ENCODE measurements at regions of chr6 and their contacts with region 1.

Region 1: DNA sequence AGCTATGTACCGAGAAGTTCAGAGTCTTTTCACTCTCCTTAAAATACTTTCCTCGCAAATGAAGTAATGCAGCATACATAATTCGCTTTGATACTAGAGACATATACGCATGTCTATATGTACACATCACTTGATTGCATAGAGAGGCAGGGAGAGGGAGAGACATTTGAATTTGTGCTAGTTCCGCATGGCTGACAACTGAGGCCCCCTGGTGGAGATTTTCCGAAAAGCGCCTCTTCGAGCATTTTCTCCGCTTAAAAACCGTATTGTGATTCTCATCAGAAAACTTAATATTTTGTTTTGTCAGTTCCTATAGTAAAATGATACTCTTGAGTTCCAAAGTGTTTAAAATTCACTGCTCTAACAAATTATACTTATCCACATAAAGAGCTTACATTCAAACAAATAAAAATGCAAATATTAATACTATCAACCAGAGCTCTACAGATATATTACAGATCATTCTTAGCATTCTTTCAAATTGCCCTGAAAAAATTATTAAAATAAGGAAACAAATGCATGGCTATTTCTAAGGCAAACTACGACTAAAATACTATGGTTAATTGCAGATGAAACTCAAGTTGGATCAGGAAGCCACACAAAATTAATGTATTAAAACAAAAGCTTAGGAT is 637 bp downstream of the MYLK4 start:
- DNase-seq: peak in 1 of 2 experiments; percentile 81
- H3K4me3 ChIP-seq: no peak overlapping the region
- H3K27ac ChIP-seq: no peak overlapping the region
- H3K4me1 ChIP-seq: peaks cover 0 to 5% (median 2%) of the 10 kb centered on the region in 4 experiments; a peak in 4 of 7 replicates
- H3K27me3 ChIP-seq: no peaks in the 10 kb centered on the region
- CTCF ChIP-seq: peak; percentile 52 to 76 (median 73)
- EP300 ChIP-seq: no peak
- POLR2A ChIP-seq: no peak
- RAD21 ChIP-seq: peak; percentile 56 to 65

Region 2: DNA sequence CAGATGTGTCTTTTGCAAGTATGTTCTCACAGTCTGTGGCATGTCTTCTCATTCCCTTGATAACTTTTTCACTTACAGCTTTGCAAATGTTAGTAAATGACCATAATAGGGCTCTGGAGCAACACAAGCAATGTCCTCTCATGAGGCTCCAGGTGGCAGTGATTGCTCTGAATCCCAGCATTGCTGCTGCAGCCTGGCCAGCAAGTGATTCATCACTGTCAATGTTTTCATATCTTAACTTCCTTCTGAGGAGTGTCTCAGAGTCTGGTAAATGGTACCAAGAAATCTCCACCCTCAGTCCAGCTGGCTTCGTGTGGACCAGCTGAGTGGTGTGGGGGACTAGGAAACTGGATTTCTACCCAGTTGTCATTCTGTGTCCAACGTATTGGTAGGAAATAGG is 139.0 kb before region 1 on chr6:
- CTCF ChIA-PET with region 1: no interaction called
- POLR2A ChIA-PET with region 1: no interaction called
- DNase-seq: no peak
- H3K4me3 ChIP-seq: no peak overlapping the region
- H3K27ac ChIP-seq: no peak overlapping the region
- H3K4me1 ChIP-seq: no peaks in the 10 kb centered on the region
- H3K27me3 ChIP-seq: no peaks in the 10 kb centered on the region
- CTCF ChIP-seq: no peak
- EP300 ChIP-seq: no peak
- POLR2A ChIP-seq: no peak
- RAD21 ChIP-seq: no peak

Region 3: DNA sequence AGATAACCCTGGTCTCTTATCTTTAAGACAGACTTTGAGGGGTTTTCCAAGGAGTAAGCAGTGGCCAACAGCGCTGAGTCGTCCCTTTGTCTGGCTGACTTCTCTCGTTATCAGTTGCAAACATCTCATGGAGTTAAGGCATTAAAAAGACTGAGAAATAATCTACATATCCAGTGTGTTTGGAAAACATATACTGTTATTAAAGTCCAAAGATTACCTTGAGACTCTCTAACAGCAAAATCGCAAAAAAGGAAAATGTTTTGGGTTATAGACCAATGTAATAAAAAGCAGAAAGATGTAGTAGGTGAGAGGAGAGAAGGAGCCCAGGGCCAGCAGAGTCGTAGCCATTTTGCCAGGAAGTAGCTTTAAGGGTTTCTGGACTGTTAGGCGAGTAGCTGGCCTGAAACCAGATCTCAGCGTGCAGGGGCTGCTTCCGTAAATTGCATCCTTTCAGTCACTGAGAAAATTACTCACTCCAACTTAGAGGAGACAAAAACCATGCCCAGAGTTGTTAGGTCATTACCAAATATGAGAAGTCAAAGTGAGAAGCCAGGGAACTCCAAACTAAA is 24.0 kb before region 1 on chr6:
- CTCF ChIA-PET with region 1: interaction called, 13 read pairs
- POLR2A ChIA-PET with region 1: no interaction called
- DNase-seq: no peak
- H3K4me3 ChIP-seq: no peak overlapping the region
- H3K27ac ChIP-seq: no peak overlapping the region
- H3K4me1 ChIP-seq: no peaks in the 10 kb centered on the region; a peak in 2 of 7 replicates
- H3K27me3 ChIP-seq: no peaks in the 10 kb centered on the region; a peak in 1 of 7 replicates
- CTCF ChIP-seq: no peak
- EP300 ChIP-seq: no peak
- POLR2A ChIP-seq: no peak
- RAD21 ChIP-seq: no peak

Region 4: DNA sequence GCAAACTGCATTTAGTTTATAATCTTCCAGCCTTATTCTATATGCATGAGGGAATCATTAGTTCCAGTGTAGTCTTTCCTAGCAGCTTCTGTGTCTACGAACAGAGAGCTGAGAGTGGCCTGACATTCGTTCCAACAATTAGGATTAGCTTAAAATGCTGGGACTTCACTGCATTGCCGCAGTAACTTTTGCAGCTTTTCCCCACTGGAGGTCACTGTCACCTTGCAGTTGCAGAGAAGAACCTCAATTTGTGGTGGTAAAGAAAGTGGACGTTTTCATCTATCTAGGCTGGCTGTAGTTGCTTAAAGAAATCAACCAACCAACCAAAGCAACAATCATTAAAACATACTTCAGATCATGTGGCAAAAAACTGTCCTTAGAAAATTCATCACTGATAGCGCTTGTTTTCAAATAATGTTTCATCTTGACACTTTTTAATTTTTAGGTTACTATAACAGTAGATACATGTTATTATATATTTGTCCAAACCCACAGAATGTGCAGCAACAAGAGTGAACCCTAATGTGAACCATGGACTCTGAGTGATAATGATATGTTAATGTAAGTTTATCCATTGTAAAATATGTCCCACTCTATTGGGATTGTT is 11.6 kb before region 1 on chr6:
- CTCF ChIA-PET with region 1: interaction called, 160 read pairs
- POLR2A ChIA-PET with region 1: no interaction called
- DNase-seq: peak in 1 of 2 experiments; percentile 64
- H3K4me3 ChIP-seq: no peak overlapping the region
- H3K27ac ChIP-seq: no peak overlapping the region
- H3K4me1 ChIP-seq: peaks cover 3 to 20% (median 6%) of the 10 kb centered on the region in 4 experiments
- H3K27me3 ChIP-seq: no peaks in the 10 kb centered on the region
- CTCF ChIP-seq: peak; percentile 61 to 93 (median 89)
- EP300 ChIP-seq: no peak
- POLR2A ChIP-seq: no peak
- RAD21 ChIP-seq: peak; percentile 93 to 96

Region 5: GRCh38 chr6:2765166-2765895 is 15.2 kb after region 1 on chr6 and contains the start of gene WRNIP1:
- CTCF ChIA-PET with region 1: interaction called, 163 read pairs
- POLR2A ChIA-PET with region 1: interaction called, 4 read pairs
- DNase-seq: peak; percentile 92 to 95
- H3K4me3 ChIP-seq: peak within 1 kb of the TSS; percentile 81 to 94 (median 84)
- H3K27ac ChIP-seq: peak within 1 kb of the TSS; percentile 40
- H3K4me1 ChIP-seq: peaks cover 0 to 11% (median 8%) of the 10 kb centered on the region in 4 experiments; a peak in 4 of 7 replicates
- H3K27me3 ChIP-seq: no peaks in the 10 kb centered on the region
- CTCF ChIP-seq: peak; percentile 65 to 70 (median 66)
- EP300 ChIP-seq: peak in 1 of 2 experiments; percentile 58; a peak in 1 of 3 replicates
- POLR2A ChIP-seq: no peak
- RAD21 ChIP-seq: peak; percentile 9 to 23; a peak in 1 of 4 replicates
- total RNA-seq, gene WRNIP1: 39.2 TPM in 2 replicates

Region 6: DNA sequence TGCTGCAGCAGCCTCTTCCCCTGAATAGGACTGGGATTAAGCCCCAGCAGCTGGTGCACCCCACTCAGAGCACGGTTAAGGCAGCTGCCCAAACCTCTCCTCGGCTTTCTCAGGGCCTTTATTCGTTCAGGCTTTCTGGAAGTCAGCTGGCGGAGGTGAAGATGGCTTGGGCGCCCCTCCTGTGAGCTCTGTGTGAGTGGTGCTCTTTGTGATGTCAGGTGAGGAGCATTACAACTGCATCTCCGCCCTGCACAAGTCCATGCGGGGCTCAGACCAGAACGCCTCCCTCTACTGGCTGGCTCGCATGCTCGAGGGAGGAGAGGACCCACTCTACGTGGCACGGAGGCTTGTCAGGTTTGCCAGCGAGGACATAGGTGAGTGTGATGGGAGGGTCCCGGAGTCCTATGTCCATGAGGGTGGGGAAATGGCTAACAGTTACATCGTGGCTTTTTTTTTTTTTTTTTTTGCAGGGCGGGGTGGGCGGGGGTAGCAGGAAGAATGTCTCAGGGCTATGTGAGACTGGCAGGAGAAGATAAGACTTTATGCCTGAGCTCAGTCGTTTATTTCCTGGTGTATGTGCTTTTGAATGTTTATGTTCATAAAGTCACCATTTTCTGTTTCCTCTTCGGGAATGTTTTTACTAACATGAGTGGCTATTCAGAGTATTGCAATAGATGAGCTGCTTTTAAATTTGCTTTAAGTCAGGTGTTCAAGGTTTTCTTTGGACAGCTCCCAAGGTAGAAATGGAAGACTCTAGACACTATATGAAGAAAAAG is 33.3 kb after region 1 on chr6:
- CTCF ChIA-PET with region 1: interaction called, 15 read pairs
- POLR2A ChIA-PET with region 1: no interaction called
- DNase-seq: peak in 1 of 2 experiments; percentile 69
- H3K4me3 ChIP-seq: no peak overlapping the region
- H3K27ac ChIP-seq: no peak overlapping the region
- H3K4me1 ChIP-seq: peaks cover 0 to 3% (median 0%) of the 10 kb centered on the region in 4 experiments; a peak in 2 of 7 replicates
- H3K27me3 ChIP-seq: no peaks in the 10 kb centered on the region
- CTCF ChIP-seq: peak; percentile 11 to 66 (median 54); a peak in 3 of 4 replicates
- EP300 ChIP-seq: no peak
- POLR2A ChIP-seq: no peak
- RAD21 ChIP-seq: peak in 1 of 2 experiments; percentile 24; a peak in 1 of 4 replicates

Region 7: GRCh38 chr6:2848851-2849250 is 98.8 kb after region 1 on chr6:
- CTCF ChIA-PET with region 1: no interaction called
- POLR2A ChIA-PET with region 1: no interaction called
- DNase-seq: no peak
- H3K4me3 ChIP-seq: no peak overlapping the region
- H3K27ac ChIP-seq: no peak overlapping the region
- H3K4me1 ChIP-seq: peaks cover 4 to 25% (median 9%) of the 10 kb centered on the region in 4 experiments
- H3K27me3 ChIP-seq: no peaks in the 10 kb centered on the region
- CTCF ChIP-seq: no peak
- EP300 ChIP-seq: no peak
- POLR2A ChIP-seq: peak in 1 of 2 experiments; percentile 62; a peak in 1 of 3 replicates
- RAD21 ChIP-seq: no peak

Region 8: DNA sequence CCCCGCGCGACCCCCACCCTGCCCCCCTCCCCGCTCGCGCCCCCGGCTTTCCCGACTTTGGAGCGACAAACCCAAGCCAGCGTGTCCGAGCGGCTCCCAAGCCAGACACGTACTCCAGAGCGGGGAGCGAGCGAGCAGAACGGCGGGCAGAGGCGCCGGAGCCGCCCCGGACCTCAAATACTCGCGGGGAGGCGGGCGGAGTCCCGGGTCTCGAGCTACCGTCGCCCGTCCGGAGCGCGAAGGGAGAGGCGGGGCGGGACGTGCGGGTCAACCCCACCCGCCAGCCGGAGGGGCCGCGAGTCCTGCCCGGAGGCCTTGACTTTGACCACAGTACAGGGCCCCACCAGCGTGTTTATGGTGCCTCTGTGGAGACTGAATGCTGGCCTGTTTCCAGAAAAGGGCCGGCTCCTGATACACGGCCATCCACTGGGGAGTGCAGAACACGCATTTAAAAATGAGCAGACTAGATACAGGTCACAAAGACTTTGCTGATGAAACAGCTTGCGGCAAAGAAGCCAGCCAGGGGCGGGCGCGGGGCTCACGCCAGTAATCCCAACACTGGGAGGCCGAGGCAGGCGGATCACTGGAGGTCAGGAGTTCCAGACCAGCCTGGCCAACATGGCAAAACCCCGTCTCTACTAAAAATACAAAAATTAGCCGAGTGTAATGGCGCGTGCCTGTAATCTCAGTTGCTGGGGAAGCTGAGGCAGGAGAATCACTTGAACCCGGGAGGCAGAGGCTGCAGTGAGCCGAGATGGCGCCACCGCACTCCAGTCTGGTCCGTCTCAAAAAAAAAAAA is 221.5 kb after region 1 on chr6 and contains the start of gene SERPINB6:
- CTCF ChIA-PET with region 1: no interaction called
- POLR2A ChIA-PET with region 1: no interaction called
- DNase-seq: peak in 1 of 2 experiments; percentile 63
- H3K4me3 ChIP-seq: peak within 1 kb of the TSS; percentile 44 to 78 (median 62)
- H3K27ac ChIP-seq: no peak within 1 kb of the TSS
- H3K4me1 ChIP-seq: peaks cover 0 to 3% (median 0%) of the 10 kb centered on the region in 4 experiments; a peak in 2 of 7 replicates
- H3K27me3 ChIP-seq: peaks cover 0 to 2% (median 0%) of the 10 kb centered on the region in 4 experiments; a peak in 1 of 7 replicates
- CTCF ChIP-seq: no peak
- EP300 ChIP-seq: no peak
- POLR2A ChIP-seq: no peak
- RAD21 ChIP-seq: no peak
- total RNA-seq, gene SERPINB6: 29.4 and 31.2 TPM in 2 replicates